K562 (cell line): ENCODE measurements at regions of chr10 and their contacts with region 1.

Region 1: DNA sequence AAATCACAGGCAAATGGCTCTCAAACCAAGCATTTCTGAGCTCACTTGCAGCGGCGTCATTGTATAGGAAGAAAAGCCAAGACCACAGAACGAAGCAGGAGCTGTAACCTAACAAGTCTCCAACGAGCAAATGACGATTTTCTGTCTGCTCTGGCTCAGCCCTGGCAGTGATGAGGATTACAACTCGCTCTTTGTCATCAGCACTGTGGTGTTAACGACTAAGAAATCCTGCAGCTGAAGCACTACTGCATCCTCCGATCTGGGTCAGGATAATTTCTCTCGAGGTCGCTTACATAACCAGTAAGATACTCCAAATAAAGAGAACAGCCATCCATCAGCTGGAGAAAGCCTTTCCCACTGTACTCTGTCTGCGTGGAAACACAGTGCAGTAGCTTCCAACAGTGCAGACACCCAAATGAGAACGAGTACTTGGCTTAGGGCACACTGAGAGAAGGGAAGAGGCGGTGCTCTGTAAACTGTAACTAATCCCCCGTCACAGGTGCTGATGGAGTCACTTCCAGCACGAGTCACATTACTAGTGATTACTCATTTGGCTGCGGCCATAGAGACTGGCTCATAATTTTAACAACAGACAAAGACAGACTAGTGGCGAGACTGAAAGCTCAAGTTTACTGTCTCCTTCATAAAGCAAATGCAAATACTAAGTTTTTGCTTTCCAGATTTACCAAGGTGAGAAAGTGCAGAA is 135.8 kb downstream of the NRBF2 start:
- DNase-seq: peak; percentile 63 to 96 (median 78)
- ATAC-seq: peak; percentile 88
- H3K4me3 ChIP-seq: peak overlapping the region; percentile 53
- H3K27ac ChIP-seq: peak overlapping the region; percentile 78
- H3K4me1 ChIP-seq: peaks cover 3% of the 10 kb centered on the region in 2 experiments; a peak in 1 of 5 replicates
- H3K27me3 ChIP-seq: no peaks in the 10 kb centered on the region
- CTCF ChIP-seq: peak in 2 of 3 experiments; percentile 32 to 40
- EP300 ChIP-seq: peak; percentile 82
- POLR2A ChIP-seq: peak; percentile 97
- RAD21 ChIP-seq: 0 out of 4 replicates have a peak, but pooled peaks of 1 of the 2 experiments have one; percentile 18

Region 2: DNA sequence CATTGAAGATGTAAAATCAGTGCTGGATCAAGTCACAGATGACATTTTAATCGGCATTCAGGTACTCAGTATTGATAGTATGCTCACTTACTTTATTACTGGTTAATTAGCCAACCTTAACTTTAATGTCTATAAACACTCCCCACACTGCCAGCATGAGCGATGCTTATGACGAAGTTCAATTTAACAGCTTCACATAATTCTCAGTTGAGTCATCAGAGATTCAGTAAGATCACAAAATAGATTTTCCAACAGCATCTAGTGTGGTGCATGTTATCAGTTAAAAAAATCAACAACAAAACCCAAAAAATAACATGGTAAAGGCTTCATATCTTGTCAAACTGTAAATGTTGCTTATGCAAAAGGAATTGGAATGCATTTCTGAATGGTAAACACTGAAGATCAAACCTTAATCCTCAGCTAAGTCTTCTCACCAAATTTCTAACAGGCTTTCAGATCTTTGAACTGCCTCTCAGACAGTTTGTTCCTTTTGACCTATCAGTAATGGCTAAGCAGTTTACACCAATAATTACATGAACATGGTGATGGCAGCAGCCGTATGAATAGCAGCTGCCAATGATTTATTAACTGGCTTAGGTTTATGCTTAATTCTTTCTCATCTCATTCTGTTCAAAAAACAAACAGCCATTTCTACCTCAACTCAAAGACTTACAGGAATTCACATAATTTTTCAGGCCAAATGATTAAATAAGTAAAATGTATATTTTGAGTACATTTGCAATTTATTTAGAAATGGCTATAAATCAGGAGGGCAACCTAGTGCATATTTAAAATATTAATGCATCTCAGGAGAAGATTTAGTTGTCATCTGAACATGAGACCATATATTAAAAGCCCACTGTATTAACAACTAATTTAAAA is 1507.8 kb before region 1 on chr10:
- CTCF ChIA-PET with region 1: no interaction called
- POLR2A ChIA-PET with region 1: no interaction called
- in situ Hi-C with region 1: no loop called
- intact Hi-C with region 1: loop called (anchors 5 kb)
- DNase-seq: peak in 1 of 4 experiments; percentile 41
- ATAC-seq: no peak
- H3K4me3 ChIP-seq: no peak overlapping the region
- H3K27ac ChIP-seq: peak overlapping the region; percentile 43
- H3K4me1 ChIP-seq: peaks cover 0 to 70% of the 10 kb centered on the region in 2 experiments; a peak in 4 of 5 replicates
- H3K27me3 ChIP-seq: no peaks in the 10 kb centered on the region; a peak in 1 of 5 replicates
- CTCF ChIP-seq: no peak
- EP300 ChIP-seq: no peak
- POLR2A ChIP-seq: no peak
- RAD21 ChIP-seq: 0 out of 4 replicates have a peak, but pooled peaks of 1 of the 2 experiments have one; percentile 6

Region 3: GRCh38 chr10:63217120-63217605 is 51.8 kb before region 1 on chr10:
- CTCF ChIA-PET with region 1: no interaction called
- POLR2A ChIA-PET with region 1: interaction called, 4 read pairs
- in situ Hi-C with region 1: no loop called
- intact Hi-C with region 1: loop called (anchors 2 kb)
- DNase-seq: peak in 2 of 4 experiments; percentile 39 to 61
- ATAC-seq: peak; percentile 79
- H3K4me3 ChIP-seq: no peak overlapping the region
- H3K27ac ChIP-seq: no peak overlapping the region
- H3K4me1 ChIP-seq: no peaks in the 10 kb centered on the region
- H3K27me3 ChIP-seq: no peaks in the 10 kb centered on the region
- CTCF ChIP-seq: peak; percentile 38 to 77 (median 47); a peak in 3 of 6 replicates
- EP300 ChIP-seq: no peak
- POLR2A ChIP-seq: no peak
- RAD21 ChIP-seq: peak; percentile 87 to 90

Region 4: GRCh38 chr10:63256009-63256773 is 12.8 kb before region 1 on chr10:
- CTCF ChIA-PET with region 1: no interaction called
- POLR2A ChIA-PET with region 1: interaction called, 60 read pairs
- in situ Hi-C with region 1: no loop called
- intact Hi-C with region 1: no loop called
- DNase-seq: no peak
- ATAC-seq: peak; percentile 3; the same call in 1 of the 3 replicates
- H3K4me3 ChIP-seq: no peak overlapping the region
- H3K27ac ChIP-seq: no peak overlapping the region
- H3K4me1 ChIP-seq: peaks cover 6 to 12% of the 10 kb centered on the region in 2 experiments; a peak in 4 of 5 replicates
- H3K27me3 ChIP-seq: no peaks in the 10 kb centered on the region
- CTCF ChIP-seq: no peak
- EP300 ChIP-seq: no peak
- POLR2A ChIP-seq: no peak
- RAD21 ChIP-seq: no peak

Region 5: GRCh38 chr10:63286754-63287264 is 17.9 kb after region 1 on chr10:
- CTCF ChIA-PET with region 1: no interaction called
- POLR2A ChIA-PET with region 1: interaction called, 12 read pairs
- in situ Hi-C with region 1: no loop called
- intact Hi-C with region 1: no loop called
- DNase-seq: no peak
- ATAC-seq: no peak
- H3K4me3 ChIP-seq: no peak overlapping the region
- H3K27ac ChIP-seq: no peak overlapping the region
- H3K4me1 ChIP-seq: peaks cover 0 to 6% of the 10 kb centered on the region in 2 experiments; a peak in 2 of 5 replicates
- H3K27me3 ChIP-seq: no peaks in the 10 kb centered on the region
- CTCF ChIP-seq: no peak
- EP300 ChIP-seq: no peak
- POLR2A ChIP-seq: no peak
- RAD21 ChIP-seq: no peak

Region 6: DNA sequence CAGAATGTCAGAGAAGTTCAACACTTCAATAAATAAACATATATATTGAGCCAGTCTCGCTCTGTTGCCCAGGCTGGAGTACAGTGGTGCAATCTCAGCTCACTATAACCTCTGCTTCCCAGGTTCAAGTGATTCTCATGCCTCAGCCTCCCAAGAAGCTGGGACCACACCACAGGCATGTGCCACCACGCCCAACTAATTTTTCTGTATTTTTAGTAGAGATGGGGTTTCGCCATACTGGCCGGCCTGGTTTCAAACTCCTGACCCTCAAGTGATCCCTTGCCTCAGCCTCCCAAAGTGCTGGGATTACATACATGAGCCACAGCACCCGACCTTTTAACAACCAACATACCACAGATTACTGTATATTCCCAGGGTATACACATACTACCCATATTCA is 62.6 kb after region 1 on chr10:
- CTCF ChIA-PET with region 1: no interaction called
- POLR2A ChIA-PET with region 1: no interaction called
- in situ Hi-C with region 1: no loop called
- intact Hi-C with region 1: no loop called
- DNase-seq: no peak
- ATAC-seq: no peak
- H3K4me3 ChIP-seq: no peak overlapping the region
- H3K27ac ChIP-seq: no peak overlapping the region
- H3K4me1 ChIP-seq: no peaks in the 10 kb centered on the region
- H3K27me3 ChIP-seq: no peaks in the 10 kb centered on the region
- CTCF ChIP-seq: no peak
- EP300 ChIP-seq: no peak
- POLR2A ChIP-seq: no peak
- RAD21 ChIP-seq: no peak

Region 7: GRCh38 chr10:63465293-63466143 is 196.6 kb after region 1 on chr10 and contains the start of gene JMJD1C:
- CTCF ChIA-PET with region 1: no interaction called
- POLR2A ChIA-PET with region 1: interaction called, 13 read pairs
- in situ Hi-C with region 1: no loop called
- intact Hi-C with region 1: loop called (anchors 1 kb)
- DNase-seq: peak; percentile 82 to 87 (median 84)
- ATAC-seq: peak; percentile 83
- H3K4me3 ChIP-seq: peak within 1 kb of the TSS; percentile 73
- H3K27ac ChIP-seq: peak within 1 kb of the TSS; percentile 89
- H3K4me1 ChIP-seq: peaks cover 0 to 19% of the 10 kb centered on the region in 2 experiments; a peak in 4 of 5 replicates
- H3K27me3 ChIP-seq: no peaks in the 10 kb centered on the region
- CTCF ChIP-seq: peak in 2 of 3 experiments; percentile 1 to 24; a peak in 2 of 6 replicates
- EP300 ChIP-seq: no peak
- POLR2A ChIP-seq: peak; percentile 86
- RAD21 ChIP-seq: peak in 1 of 2 experiments; percentile 10; a peak in 3 of 4 replicates
- polyA plus RNA-seq, gene JMJD1C: 25.3 to 38.5 TPM

Region 8: GRCh38 chr10:63521416-63522276 is 252.7 kb after region 1 on chr10:
- CTCF ChIA-PET with region 1: no interaction called
- POLR2A ChIA-PET with region 1: interaction called, 4 read pairs
- in situ Hi-C with region 1: no loop called
- intact Hi-C with region 1: loop called (anchors 5 kb)
- DNase-seq: peak; percentile 81 to 87 (median 82)
- ATAC-seq: peak; percentile 89
- H3K4me3 ChIP-seq: peak overlapping the region; percentile 76
- H3K27ac ChIP-seq: peak overlapping the region; percentile 96
- H3K4me1 ChIP-seq: peaks cover 16% of the 10 kb centered on the region in 2 experiments; a peak in 4 of 5 replicates
- H3K27me3 ChIP-seq: no peaks in the 10 kb centered on the region
- CTCF ChIP-seq: no peak
- EP300 ChIP-seq: no peak
- POLR2A ChIP-seq: peak; percentile 75
- RAD21 ChIP-seq: peak in 1 of 2 experiments; percentile 13; a peak in 2 of 4 replicates